Endothelial cell of umbilical vein (primary cell): ENCODE measurements at regions of chr5 and their contacts with region 1.

Region 1: DNA sequence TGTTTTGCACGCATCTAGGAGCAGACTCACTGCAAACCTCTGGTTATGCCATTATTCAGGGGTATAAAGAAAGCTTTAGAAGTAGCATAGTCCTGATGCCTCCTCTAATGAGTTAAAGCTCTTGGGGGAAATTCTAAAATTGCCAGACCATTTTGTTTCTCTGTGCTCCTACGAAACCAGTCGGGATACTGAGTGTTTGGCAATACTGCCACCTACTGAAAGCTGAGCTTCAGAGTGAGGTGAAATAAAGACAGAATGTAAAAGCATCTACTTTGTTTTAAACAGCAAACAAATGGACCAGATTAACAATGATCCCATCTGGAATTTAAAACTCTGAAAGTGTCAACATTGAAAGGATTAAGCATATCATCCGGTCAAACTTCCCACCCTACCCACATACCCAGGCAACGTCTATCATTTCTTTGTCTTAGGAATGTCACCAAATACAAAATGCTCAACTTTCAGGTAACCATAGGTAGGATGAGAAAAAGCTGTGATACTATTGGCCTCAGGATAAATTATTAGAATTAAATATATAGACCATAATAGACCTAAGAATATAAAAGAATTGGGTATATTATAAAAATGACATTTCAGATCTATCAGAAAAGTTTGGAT is 77.8 kb upstream of the SHISAL2B start:
- DNase-seq: peak; percentile 76
- H3K4me3 ChIP-seq: no peak overlapping the region
- H3K27ac ChIP-seq: no peak overlapping the region
- H3K4me1 ChIP-seq: no peaks in the 10 kb centered on the region
- H3K27me3 ChIP-seq: peaks cover 5 to 42% of the 10 kb centered on the region in 2 experiments
- CTCF ChIP-seq: peak; percentile 61 to 64
- POLR2A ChIP-seq: no peak

Region 2: DNA sequence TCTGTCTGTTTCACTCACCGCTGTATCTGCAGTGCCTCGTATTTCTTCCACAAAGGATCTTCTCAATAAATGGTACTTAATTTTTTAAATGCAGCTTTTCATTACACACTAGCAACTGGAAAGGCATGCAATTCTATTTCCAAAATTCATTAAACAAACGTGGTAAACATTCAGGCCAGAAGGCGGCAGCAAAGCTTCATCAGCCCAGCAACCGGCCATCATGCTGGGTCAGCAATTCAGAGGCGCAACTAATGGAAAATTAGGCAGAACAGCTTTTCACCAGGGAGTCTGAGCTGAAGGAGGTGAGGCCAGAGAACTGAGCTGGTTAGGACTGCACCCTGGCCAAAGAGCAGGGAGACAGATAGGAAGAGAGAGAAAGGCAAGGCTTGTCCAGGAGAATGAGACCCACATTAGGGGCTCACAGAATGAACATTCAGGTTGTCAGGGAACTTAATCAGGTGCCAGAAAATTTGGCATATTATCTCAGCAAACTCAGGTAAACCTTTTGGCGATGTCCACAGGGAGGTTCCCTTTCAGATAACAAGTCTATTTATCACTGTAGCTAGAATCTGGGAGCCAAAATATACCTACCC is 464.5 kb before region 1 on chr5:
- CTCF ChIA-PET with region 1: interaction called, 45 read pairs
- POLR2A ChIA-PET with region 1: no interaction called
- dilution Hi-C with region 1: no loop called
- intact Hi-C with region 1: loop called (anchors 1 kb)
- DNase-seq: peak; percentile 60
- H3K4me3 ChIP-seq: no peak overlapping the region
- H3K27ac ChIP-seq: no peak overlapping the region
- H3K4me1 ChIP-seq: peaks cover 6% of the 10 kb centered on the region
- H3K27me3 ChIP-seq: peaks cover 0 to 6% of the 10 kb centered on the region in 2 experiments
- CTCF ChIP-seq: peak; percentile 70 to 73
- POLR2A ChIP-seq: no peak

Region 3: DNA sequence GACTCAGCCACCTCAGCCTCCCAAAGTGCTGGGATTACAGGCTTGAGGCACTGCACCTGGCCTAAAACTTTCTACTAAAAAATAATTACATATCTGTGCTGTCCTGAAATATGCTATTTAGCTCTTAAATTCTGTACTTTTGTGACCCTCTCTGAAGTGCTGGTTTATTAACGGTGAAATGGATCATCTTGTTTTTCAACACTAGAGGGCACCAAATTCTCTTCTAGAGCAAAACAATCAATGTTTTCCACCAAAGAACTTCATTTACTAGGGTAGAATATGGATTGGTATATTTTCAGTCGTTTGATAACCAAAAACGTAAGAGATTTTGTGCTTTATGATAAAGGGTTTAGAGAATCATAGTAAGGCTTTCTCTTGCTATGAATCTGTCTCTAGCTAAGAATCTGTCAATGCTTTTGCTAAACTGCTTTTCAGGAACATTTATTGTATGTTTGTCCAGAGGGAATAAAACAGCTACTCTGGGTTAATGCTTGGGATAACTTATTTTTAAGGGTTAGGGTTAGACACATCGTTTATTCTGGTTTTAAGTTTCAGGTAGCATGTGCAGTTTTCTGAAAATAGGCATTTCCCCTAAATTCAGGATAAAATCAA is 383.2 kb before region 1 on chr5:
- CTCF ChIA-PET with region 1: interaction called, 256 read pairs
- POLR2A ChIA-PET with region 1: no interaction called
- dilution Hi-C with region 1: no loop called
- intact Hi-C with region 1: loop called (anchors 1 kb)
- DNase-seq: peak; percentile 49
- H3K4me3 ChIP-seq: no peak overlapping the region
- H3K27ac ChIP-seq: no peak overlapping the region
- H3K4me1 ChIP-seq: no peaks in the 10 kb centered on the region
- H3K27me3 ChIP-seq: no peaks in the 10 kb centered on the region
- CTCF ChIP-seq: peak; percentile 24 to 41
- POLR2A ChIP-seq: no peak

Region 4: GRCh38 chr5:64384761-64385160 is 227.7 kb before region 1 on chr5:
- CTCF ChIA-PET with region 1: interaction called, 10 read pairs
- POLR2A ChIA-PET with region 1: no interaction called
- dilution Hi-C with region 1: no loop called
- intact Hi-C with region 1: loop called (anchors 1 kb)
- DNase-seq: peak; percentile 55
- H3K4me3 ChIP-seq: no peak overlapping the region
- H3K27ac ChIP-seq: no peak overlapping the region
- H3K4me1 ChIP-seq: no peaks in the 10 kb centered on the region
- H3K27me3 ChIP-seq: no peaks in the 10 kb centered on the region
- CTCF ChIP-seq: peak; percentile 29 to 41
- POLR2A ChIP-seq: no peak

Region 5: GRCh38 chr5:64595031-64595855 is 17.2 kb before region 1 on chr5:
- CTCF ChIA-PET with region 1: interaction called, 18 read pairs
- POLR2A ChIA-PET with region 1: no interaction called
- dilution Hi-C with region 1: no loop called
- intact Hi-C with region 1: no loop called
- DNase-seq: peak; percentile 19
- H3K4me3 ChIP-seq: no peak overlapping the region
- H3K27ac ChIP-seq: no peak overlapping the region
- H3K4me1 ChIP-seq: no peaks in the 10 kb centered on the region
- H3K27me3 ChIP-seq: peaks cover 0 to 6% of the 10 kb centered on the region in 2 experiments
- CTCF ChIP-seq: peak; percentile 30 to 62
- POLR2A ChIP-seq: no peak

Region 6: GRCh38 chr5:65076251-65076869 is 463.9 kb after region 1 on chr5:
- CTCF ChIA-PET with region 1: no interaction called
- POLR2A ChIA-PET with region 1: no interaction called
- dilution Hi-C with region 1: no loop called
- intact Hi-C with region 1: no loop called
- DNase-seq: peak; percentile 36
- H3K4me3 ChIP-seq: no peak overlapping the region
- H3K27ac ChIP-seq: no peak overlapping the region
- H3K4me1 ChIP-seq: peaks cover 23% of the 10 kb centered on the region
- H3K27me3 ChIP-seq: no peaks in the 10 kb centered on the region
- CTCF ChIP-seq: peak; percentile 32 to 36
- POLR2A ChIP-seq: no peak

Region 7: DNA sequence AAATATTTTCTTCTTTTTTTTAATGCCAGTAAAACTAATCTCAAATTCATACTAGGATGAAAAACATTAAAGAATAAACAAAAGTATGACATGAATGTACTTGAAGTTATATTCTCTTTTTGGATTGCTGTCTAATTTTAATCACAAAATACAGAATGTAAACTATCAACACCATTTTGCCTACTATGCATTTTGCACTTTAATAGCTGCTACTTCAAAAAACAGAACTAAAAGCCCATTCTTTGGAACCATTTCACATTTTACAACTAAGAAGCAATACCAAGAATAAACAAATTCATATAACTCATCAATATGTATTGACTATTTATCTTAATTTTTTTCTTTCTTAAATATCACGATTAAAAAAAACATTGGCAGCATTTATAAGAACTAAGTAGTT is 811.2 kb after region 1 on chr5:
- CTCF ChIA-PET with region 1: no interaction called
- POLR2A ChIA-PET with region 1: no interaction called
- dilution Hi-C with region 1: no loop called
- intact Hi-C with region 1: no loop called
- DNase-seq: no peak
- H3K4me3 ChIP-seq: no peak overlapping the region
- H3K27ac ChIP-seq: no peak overlapping the region
- H3K4me1 ChIP-seq: no peaks in the 10 kb centered on the region
- H3K27me3 ChIP-seq: no peaks in the 10 kb centered on the region
- CTCF ChIP-seq: no peak
- POLR2A ChIP-seq: no peak